ENCODE measurements at regions of chr13 and their contacts with region 1.

Region 1: GRCh38 chr13:74032325-74032724 is 101.9 kb downstream of the KLF12 start:
- DNase-seq: no peak
- ATAC-seq: no peak
- H3K4me3 ChIP-seq: no peak overlapping the region
- H3K4me3 Mint-ChIP-seq: no peak overlapping the region
- H3K27ac ChIP-seq: no peak overlapping the region
- H3K27ac Mint-ChIP-seq: peak overlapping the region; percentile 60
- H3K4me1 ChIP-seq: peaks cover 31% of the 10 kb centered on the region
- H3K4me1 Mint-ChIP-seq: peaks cover 66% of the 10 kb centered on the region
- H3K27me3 ChIP-seq: no peaks in the 10 kb centered on the region
- H3K27me3 Mint-ChIP-seq: no peaks in the 10 kb centered on the region
- CTCF ChIP-seq: no peak

Region 2: DNA sequence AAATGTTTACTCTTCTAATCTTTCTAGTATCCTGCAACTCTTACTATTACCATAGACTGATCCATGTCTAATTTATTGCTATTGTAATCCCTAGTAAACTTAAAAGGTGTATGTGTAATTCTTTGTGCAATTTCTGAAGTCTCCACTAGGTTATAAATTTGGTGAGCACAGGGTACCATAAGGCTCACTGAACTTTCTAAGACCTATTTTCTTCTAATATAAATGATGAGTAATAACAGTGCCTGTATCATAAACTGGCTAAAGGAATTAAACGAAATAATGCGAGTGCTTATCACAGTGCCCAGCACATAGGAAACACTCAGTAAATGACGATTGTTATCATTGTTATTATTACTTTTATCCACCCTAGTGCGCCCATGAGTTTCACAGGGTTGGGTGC is 17.2 kb before region 1 on chr13:
- CTCF ChIA-PET with region 1: no interaction called
- POLR2A ChIA-PET with region 1: no interaction called
- intact Hi-C with region 1: loop called in 1 of 2 experiments (anchors 2 kb)
- DNase-seq: peak in 2 of 9 experiments; percentile 15 to 36
- ATAC-seq: peak; percentile 63
- H3K4me3 ChIP-seq: no peak overlapping the region
- H3K4me3 Mint-ChIP-seq: no peak overlapping the region
- H3K27ac ChIP-seq: no peak overlapping the region
- H3K27ac Mint-ChIP-seq: no peak overlapping the region
- H3K4me1 ChIP-seq: peaks cover 15% of the 10 kb centered on the region
- H3K4me1 Mint-ChIP-seq: peaks cover 71% of the 10 kb centered on the region
- H3K27me3 ChIP-seq: no peaks in the 10 kb centered on the region
- H3K27me3 Mint-ChIP-seq: no peaks in the 10 kb centered on the region
- CTCF ChIP-seq: peak; percentile 44

Region 3: DNA sequence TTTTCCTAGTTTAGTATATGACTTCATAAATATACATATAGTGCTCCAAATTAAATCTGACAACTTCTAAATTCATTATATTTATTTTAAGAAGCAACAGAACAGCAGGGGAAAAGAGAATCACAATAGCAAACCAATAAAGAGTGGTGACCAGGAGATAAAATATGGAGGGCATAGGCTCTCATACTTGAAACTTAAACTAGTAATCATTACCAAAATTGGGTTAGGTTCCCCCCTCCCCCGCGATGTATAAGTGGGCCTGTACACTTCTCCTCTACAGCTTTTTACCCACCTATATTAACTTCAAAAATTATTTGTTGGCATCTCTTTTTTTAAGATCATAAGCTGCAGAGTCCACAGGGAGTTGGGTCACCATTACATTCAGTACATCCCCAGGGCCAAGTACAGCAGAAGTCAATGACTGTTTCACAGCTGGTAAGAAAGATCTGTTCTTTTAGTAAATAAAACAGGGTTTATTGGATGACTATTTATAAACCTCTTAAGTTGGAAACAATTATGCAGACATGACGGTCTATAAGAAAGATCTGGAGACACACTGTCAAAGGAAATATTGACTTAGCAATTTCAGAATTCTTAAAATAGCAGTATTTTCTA is 72.4 kb after region 1 on chr13:
- CTCF ChIA-PET with region 1: no interaction called
- POLR2A ChIA-PET with region 1: no interaction called
- intact Hi-C with region 1: no loop called
- DNase-seq: no peak
- ATAC-seq: no peak
- H3K4me3 ChIP-seq: no peak overlapping the region
- H3K4me3 Mint-ChIP-seq: no peak overlapping the region
- H3K27ac ChIP-seq: no peak overlapping the region
- H3K27ac Mint-ChIP-seq: no peak overlapping the region
- H3K4me1 ChIP-seq: peaks cover 15% of the 10 kb centered on the region
- H3K4me1 Mint-ChIP-seq: peaks cover 75% of the 10 kb centered on the region
- H3K27me3 ChIP-seq: no peaks in the 10 kb centered on the region
- H3K27me3 Mint-ChIP-seq: no peaks in the 10 kb centered on the region
- CTCF ChIP-seq: no peak

Measured in CD8-positive, alpha-beta T cell (primary cell).